Mammary epithelial cell (primary cell): ENCODE measurements at regions of chr1 and their contacts with region 1.

Region 1: DNA sequence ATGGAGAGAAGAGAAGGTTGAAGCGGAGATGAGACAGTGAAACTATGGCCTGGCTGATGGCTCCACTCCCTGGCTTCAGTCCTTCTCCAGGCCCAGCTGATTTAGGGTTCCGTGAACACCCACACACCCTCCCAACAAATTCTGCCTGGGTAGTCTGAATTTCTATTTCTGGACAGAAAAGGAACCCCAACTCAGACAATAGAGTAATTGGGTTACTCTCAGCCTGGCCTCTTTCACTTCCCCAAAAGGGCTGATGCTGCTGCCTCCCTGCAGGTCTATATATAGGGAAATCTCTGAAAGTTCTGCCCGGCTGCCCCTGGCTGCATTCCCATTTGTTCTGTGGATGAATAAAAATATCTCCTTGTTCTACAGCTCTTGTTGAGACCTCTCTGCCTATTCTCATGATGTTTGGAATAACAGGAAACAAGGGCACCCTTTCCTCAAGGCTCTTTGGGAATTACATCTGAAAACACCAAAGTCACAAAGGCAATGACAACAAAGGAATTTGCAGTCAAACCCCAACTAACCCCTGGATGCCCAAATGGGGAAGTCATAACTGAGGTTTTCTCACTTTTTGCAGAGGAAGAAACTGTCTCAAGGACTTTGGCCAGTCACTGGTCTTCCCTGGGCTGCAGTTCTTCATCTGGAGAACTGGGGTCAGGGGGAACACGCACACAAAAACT is 11.4 kb upstream of the ZSCAN20 start:
- DNase-seq: no peak
- H3K4me3 ChIP-seq: no peak overlapping the region
- H3K27ac ChIP-seq: no peak overlapping the region
- H3K4me1 ChIP-seq: peaks cover 29% of the 10 kb centered on the region
- H3K27me3 ChIP-seq: no peaks in the 10 kb centered on the region
- CTCF ChIP-seq: no peak

Region 2: GRCh38 chr1:33111970-33112369 is 349.1 kb before region 1 on chr1:
- CTCF ChIA-PET with region 1: no interaction called
- dilution Hi-C with region 1: no loop called
- in situ Hi-C with region 1: loop called in 1 of 2 experiments (anchors 10 kb)
- intact Hi-C with region 1: loop called (anchors 5 kb)
- DNase-seq: peak; percentile 26
- H3K4me3 ChIP-seq: no peak overlapping the region
- H3K27ac ChIP-seq: no peak overlapping the region
- H3K4me1 ChIP-seq: no peaks in the 10 kb centered on the region
- H3K27me3 ChIP-seq: no peaks in the 10 kb centered on the region
- CTCF ChIP-seq: peak; percentile 48 to 62

Region 3: DNA sequence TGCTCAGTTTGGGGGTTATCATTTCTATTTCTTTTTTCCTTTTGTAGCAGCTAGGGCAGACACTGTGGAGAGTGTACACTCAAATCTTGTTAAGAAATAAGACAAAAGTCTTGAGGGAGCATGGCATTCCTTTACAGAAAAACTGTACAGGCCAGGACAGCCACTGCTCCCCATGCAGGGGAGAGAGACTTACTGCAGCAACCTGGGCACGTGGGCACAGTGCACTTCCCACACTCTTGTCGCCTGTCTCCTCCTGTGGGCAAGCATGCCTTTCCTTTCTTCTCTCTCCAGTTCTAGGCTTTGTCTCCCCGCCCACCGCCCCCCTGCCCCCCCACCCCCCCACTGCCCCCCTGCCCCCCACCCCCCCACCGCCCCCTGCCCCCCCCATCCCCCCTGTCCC is 82.1 kb before region 1 on chr1:
- CTCF ChIA-PET with region 1: no interaction called
- dilution Hi-C with region 1: no loop called
- in situ Hi-C with region 1: loop called (anchors 10 to 25 kb)
- intact Hi-C with region 1: loop called (anchors 5 kb)
- DNase-seq: no peak
- H3K4me3 ChIP-seq: no peak overlapping the region
- H3K27ac ChIP-seq: no peak overlapping the region
- H3K4me1 ChIP-seq: peaks cover 21% of the 10 kb centered on the region
- H3K27me3 ChIP-seq: no peaks in the 10 kb centered on the region
- CTCF ChIP-seq: peak in 1 of 2 donors; percentile 15

Region 4: GRCh38 chr1:33802268-33802667 is 341.2 kb after region 1 on chr1:
- CTCF ChIA-PET with region 1: no interaction called
- dilution Hi-C with region 1: no loop called
- in situ Hi-C with region 1: no loop called
- intact Hi-C with region 1: no loop called
- DNase-seq: no peak
- H3K4me3 ChIP-seq: no peak overlapping the region
- H3K27ac ChIP-seq: no peak overlapping the region
- H3K4me1 ChIP-seq: no peaks in the 10 kb centered on the region
- H3K27me3 ChIP-seq: no peaks in the 10 kb centered on the region
- CTCF ChIP-seq: no peak